Heart right ventricle (tissue), 16 donors: ENCODE measurements at regions of chr11 and their contacts with region 1.

Region 1: GRCh38 chr11:61129639-61130523 is 27.6 kb downstream of the CD5 start:
- DNase-seq: peak; percentile 85 to 86
- ATAC-seq: peak; percentile 73 to 92 (median 88)
- H3K4me3 ChIP-seq: no peak overlapping the region
- H3K27ac ChIP-seq: peak overlapping the region in 3 of 10 donors; percentile 3 to 54 (median 32)
- H3K4me1 ChIP-seq: peaks cover 0 to 26% (median 13%) of the 10 kb centered on the region in 9 donors
- H3K27me3 ChIP-seq: no peaks in the 10 kb centered on the region
- CTCF ChIP-seq: peak; percentile 95 to 100 (median 99)

Region 2: GRCh38 chr11:60775420-60775961 is 354.4 kb before region 1 on chr11:
- intact Hi-C with region 1: loop called in 2 of 10 experiments (anchors 5 kb)
- DNase-seq: peak; percentile 60 to 89
- ATAC-seq: peak; percentile 82 to 92 (median 88)
- H3K4me3 ChIP-seq: peak overlapping the region in 1 of 10 donors; percentile 12
- H3K27ac ChIP-seq: peak overlapping the region in 6 of 10 donors; percentile 4 to 59 (median 34)
- H3K4me1 ChIP-seq: peaks cover 4 to 33% (median 18%) of the 10 kb centered on the region in 9 donors
- H3K27me3 ChIP-seq: peaks cover 0 to 15% (median 3%) of the 10 kb centered on the region in 7 donors
- CTCF ChIP-seq: peak; percentile 87 to 96 (median 93)

Region 3: DNA sequence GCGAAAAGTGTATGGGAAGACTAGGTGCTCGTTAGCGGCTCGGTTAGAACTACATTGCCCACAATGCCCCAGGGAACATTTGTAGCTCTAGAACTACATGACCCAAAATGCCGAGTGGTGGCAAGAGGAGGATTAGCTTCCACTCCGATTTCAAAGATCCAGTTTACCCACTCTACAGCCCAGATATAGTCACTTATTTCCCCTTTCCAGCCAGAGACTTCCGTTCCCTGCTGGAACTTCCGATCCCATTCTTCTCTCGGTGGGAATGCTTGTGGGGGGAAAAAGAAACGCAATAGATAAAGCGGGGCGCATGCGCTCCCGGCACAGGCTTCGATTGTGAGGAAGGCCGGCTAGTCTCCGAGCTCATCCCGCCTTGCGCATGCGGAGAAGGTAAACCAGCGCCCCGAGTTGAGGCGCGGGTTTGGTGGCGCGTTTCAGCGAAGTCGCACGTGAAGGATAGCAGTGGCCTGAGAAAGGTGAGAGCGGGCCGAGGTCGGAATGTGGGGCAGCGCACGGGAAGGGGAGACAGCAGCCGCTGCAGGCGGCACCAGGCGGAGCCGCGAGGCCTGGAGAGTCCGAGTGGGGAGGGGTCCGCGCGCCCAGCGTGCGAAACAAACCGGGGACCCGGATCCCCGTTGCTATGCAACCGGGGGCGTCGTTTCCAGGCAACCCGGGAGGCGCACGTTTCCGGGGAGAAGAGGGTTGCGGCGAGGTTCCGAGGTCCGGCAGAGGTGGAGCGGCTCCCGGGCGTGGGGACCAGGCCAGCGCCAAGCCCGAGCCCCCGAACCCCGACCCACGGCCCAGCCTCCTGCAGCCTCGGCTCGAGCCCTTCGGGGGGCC is 215.9 kb before region 1 on chr11 and contains the start of gene TMEM109:
- intact Hi-C with region 1: loop called in 4 of 10 experiments (anchors 5 to 10 kb)
- DNase-seq: peak; percentile 89 to 90
- ATAC-seq: peak; percentile 82 to 89 (median 87)
- H3K4me3 ChIP-seq: peak within 1 kb of the TSS; percentile 63 to 93 (median 84)
- H3K27ac ChIP-seq: peak within 1 kb of the TSS; percentile 77 to 94 (median 90)
- H3K4me1 ChIP-seq: peaks cover 11 to 85% (median 65%) of the 10 kb centered on the region in 9 donors
- H3K27me3 ChIP-seq: no peaks in the 10 kb centered on the region
- CTCF ChIP-seq: no peak
- total RNA-seq, gene TMEM109: 78.6 to 115 (median 92.7) TPM

Region 4: DNA sequence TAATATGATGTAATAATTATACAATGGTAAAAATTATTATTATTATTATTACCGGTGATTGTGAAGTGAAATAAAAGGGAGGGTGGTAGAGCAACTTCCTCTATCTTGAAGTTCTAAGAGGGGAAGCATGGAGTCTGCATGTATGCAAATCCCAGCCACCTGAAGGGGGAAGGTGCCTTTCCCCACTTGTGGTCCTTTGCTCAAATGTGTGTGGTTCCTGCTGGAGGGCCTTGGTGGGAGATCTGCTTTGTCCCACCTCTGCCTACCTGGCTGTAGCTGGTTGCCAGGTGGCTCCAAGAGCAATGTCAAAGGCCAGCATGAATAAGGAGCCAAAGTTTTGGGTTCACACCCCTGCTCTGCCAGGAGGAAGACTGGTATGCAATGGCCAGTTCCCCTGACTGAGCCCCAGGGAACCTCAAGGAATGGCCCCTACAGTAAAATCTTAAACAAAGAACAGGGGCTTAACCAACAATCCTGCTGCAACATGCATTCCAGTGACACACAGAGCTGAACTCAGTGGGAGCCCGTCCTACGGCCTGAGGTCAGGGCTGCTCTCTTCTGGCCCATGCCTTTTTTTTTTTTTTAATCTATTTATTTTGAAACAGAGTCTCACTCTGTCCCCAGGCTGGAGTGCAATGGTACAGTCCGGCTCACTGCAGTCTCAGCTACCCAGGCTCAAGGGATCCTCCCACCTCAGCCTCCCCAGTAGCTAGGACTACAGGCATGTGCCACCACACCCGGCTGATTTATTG is 197.1 kb before region 1 on chr11:
- intact Hi-C with region 1: no loop called
- DNase-seq: no peak
- ATAC-seq: no peak
- H3K4me3 ChIP-seq: no peak overlapping the region
- H3K27ac ChIP-seq: no peak overlapping the region
- H3K4me1 ChIP-seq: peaks cover 0 to 19% (median 12%) of the 10 kb centered on the region in 9 donors
- H3K27me3 ChIP-seq: peaks cover 0 to under 1% (median 0%) of the 10 kb centered on the region in 7 donors
- CTCF ChIP-seq: no peak

Region 5: DNA sequence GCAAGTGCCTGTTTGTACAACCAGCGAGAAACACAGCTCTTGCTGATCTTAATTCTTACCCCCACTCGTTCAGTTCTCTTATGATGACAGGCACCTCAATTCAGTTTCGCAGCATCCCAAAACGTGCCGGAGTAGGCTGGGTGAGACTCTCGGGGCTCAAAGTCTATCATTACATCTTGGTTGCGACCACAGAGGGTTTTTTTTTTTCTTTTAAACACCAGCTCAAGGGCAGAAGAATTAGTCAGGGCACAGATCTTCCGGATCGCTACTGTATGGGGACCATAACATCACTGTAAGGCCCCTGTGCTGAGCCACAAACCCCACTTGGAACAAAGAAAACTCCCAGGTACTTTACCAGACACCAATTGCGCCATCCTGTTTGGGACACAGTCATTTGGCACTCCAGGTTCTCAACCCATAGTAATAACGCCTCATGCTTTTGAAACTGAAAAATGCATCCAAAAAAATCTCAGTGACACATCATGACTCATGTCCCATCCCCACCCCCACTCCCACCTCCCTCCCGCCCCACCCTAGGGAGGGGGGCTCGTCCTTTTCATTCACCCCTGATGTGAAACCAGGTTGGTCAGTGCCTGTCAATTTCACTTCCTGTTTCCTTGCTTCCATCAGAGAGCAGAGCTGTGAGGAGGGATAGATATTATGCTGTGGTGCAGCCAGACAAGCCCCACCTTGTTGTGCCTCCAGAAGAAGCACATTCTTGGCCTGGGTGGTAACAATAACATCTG is 68.6 kb before region 1 on chr11:
- intact Hi-C with region 1: no loop called
- DNase-seq: no peak
- ATAC-seq: peak in 3 of 8 donors; percentile 11 to 49 (median 48)
- H3K4me3 ChIP-seq: no peak overlapping the region
- H3K27ac ChIP-seq: peak overlapping the region in 1 of 10 donors; percentile 50
- H3K4me1 ChIP-seq: peaks cover 0 to 18% (median 0%) of the 10 kb centered on the region in 9 donors
- H3K27me3 ChIP-seq: no peaks in the 10 kb centered on the region
- CTCF ChIP-seq: no peak

Region 6: GRCh38 chr11:61173456-61173855 is 43.6 kb after region 1 on chr11:
- intact Hi-C with region 1: loop called in 1 of 10 experiments (anchors 5 kb)
- DNase-seq: no peak
- ATAC-seq: no peak
- H3K4me3 ChIP-seq: no peak overlapping the region
- H3K27ac ChIP-seq: no peak overlapping the region
- H3K4me1 ChIP-seq: peaks cover 0 to 21% (median 0%) of the 10 kb centered on the region in 9 donors
- H3K27me3 ChIP-seq: peaks cover 0 to 35% (median 7%) of the 10 kb centered on the region in 7 donors
- CTCF ChIP-seq: peak in 4 of 9 donors; percentile 3 to 14 (median 11)